IMR-90 (cell line): ENCODE measurements at regions of chr3 and their contacts with region 1.

Region 1: GRCh38 chr3:109059264-109059663 is 58.7 kb downstream of the MORC1 start:
- DNase-seq: no peak
- ATAC-seq: no peak
- H3K4me3 ChIP-seq: no peak overlapping the region
- H3K27ac ChIP-seq: no peak overlapping the region
- H3K4me1 ChIP-seq: no peaks in the 10 kb centered on the region
- H3K27me3 ChIP-seq: no peaks in the 10 kb centered on the region
- CTCF ChIP-seq: no peak
- POLR2A ChIP-seq: no peak
- RAD21 ChIP-seq: no peak

Region 2: GRCh38 chr3:109045271-109046040 is 13.8 kb before region 1 on chr3:
- CTCF ChIA-PET with region 1: no interaction called
- POLR2A ChIA-PET with region 1: interaction called, 10 read pairs
- dilution Hi-C with region 1: no loop called
- in situ Hi-C with region 1: no loop called
- intact Hi-C with region 1: no loop called
- DNase-seq: no peak
- ATAC-seq: no peak
- H3K4me3 ChIP-seq: no peak overlapping the region
- H3K27ac ChIP-seq: no peak overlapping the region
- H3K4me1 ChIP-seq: no peaks in the 10 kb centered on the region
- H3K27me3 ChIP-seq: no peaks in the 10 kb centered on the region
- CTCF ChIP-seq: no peak
- POLR2A ChIP-seq: no peak
- RAD21 ChIP-seq: no peak

Region 3: DNA sequence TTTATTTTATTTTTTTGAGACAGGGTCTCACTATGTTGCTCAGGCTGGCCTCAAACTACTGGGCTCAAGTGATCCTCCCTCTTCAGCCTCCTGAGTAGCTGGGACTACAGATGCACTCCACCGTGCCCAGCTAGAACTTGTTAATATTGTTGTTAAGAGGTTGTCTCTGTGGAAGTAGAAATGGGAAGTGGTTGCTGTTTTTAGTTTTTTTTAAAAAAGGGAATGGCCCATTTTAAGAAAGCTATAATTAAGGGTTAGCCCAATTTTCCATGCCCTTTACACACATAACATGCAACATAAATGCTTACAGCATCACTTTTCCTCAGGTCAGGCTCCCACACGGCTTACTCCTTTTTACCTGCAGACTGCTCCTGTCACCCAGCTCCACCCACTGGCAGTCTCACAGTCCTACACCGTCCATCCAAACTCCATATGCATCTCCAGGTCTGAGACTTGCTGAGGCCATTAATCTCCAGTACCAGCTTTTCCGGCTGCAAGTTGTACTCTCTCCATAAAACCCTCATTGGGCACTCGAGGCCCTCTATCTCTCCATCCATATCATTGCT is 38.9 kb after region 1 on chr3:
- CTCF ChIA-PET with region 1: interaction called, 6 read pairs
- POLR2A ChIA-PET with region 1: no interaction called
- dilution Hi-C with region 1: no loop called
- in situ Hi-C with region 1: no loop called
- intact Hi-C with region 1: loop called (anchors 1 kb)
- DNase-seq: no peak
- ATAC-seq: no peak
- H3K4me3 ChIP-seq: no peak overlapping the region
- H3K27ac ChIP-seq: no peak overlapping the region
- H3K4me1 ChIP-seq: no peaks in the 10 kb centered on the region
- H3K27me3 ChIP-seq: no peaks in the 10 kb centered on the region
- CTCF ChIP-seq: 0 out of 2 replicates have a peak, but pooled peaks have one; percentile 0
- POLR2A ChIP-seq: no peak
- RAD21 ChIP-seq: no peak